Lower leg skin (tissue), 4 donors: ENCODE measurements at regions of chr11 and their contacts with region 1.

Region 1: GRCh38 chr11:115324581-115325432 is 179.4 kb downstream of the CADM1 start:
- DNase-seq: no peak
- H3K4me3 ChIP-seq: no peak overlapping the region
- CTCF ChIP-seq: peak in 1 of 3 donors; percentile 45
- POLR2A ChIP-seq: no peak

Region 2: GRCh38 chr11:115347138-115347537 is 22.3 kb after region 1 on chr11:
- intact Hi-C with region 1: no loop called
- DNase-seq: no peak
- H3K4me3 ChIP-seq: no peak overlapping the region
- CTCF ChIP-seq: no peak
- POLR2A ChIP-seq: no peak

Region 3: DNA sequence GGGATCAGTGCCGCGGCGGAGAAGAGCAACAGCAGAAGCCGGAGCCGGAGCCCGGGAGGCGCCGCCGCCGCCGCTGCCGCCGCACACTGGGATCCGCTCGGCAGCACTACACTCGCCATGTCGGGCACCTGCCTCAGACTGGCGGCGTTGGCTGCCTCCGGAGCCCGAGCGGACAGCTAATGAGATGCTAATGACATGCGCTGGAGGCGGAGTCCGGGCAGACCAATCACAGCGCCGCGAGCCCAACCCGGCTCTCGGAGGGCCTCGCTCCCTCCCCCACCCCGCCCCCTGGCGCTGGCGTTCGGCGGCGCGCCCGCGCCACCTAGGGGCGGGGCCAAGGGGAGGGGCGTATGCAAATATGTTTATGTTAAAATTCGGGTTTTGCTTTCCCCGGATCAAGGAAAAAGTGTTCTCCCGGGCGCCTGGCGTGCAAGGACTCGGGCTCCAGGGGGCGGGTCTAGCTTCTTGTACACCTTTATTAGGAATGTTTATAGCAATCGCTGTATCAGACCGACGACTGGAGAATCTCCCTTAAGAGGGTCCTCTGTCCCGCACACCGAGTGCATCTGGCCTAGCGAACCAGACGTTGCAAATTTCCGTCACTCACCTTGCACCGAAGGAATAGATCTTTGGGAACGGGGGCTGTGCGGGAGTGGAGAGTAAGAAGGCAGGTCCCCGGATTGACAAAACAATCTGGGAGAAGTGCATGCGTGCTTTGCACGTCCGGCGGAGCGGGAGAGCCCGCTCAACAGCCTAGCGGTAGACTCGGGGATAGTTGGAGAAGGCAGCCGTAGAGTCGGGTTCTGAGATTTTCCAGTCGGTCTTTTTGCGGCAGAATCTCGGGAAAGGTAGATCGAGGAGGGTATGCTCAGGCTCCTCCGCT is 179.7 kb after region 1 on chr11 and contains the start of gene CADM1:
- intact Hi-C with region 1: loop called (anchors 10 kb)
- DNase-seq: peak; percentile 90 to 98
- H3K4me3 ChIP-seq: peak within 1 kb of the TSS; percentile 38
- CTCF ChIP-seq: peak in 1 of 3 donors; percentile 42
- POLR2A ChIP-seq: no peak
- total RNA-seq, gene CADM1: 9.4 to 21.4 (median 11.8) TPM

Region 4: GRCh38 chr11:115912484-115912945 is 587.7 kb after region 1 on chr11:
- intact Hi-C with region 1: loop called (anchors 10 kb)
- DNase-seq: no peak
- H3K4me3 ChIP-seq: no peak overlapping the region
- CTCF ChIP-seq: no peak
- POLR2A ChIP-seq: no peak

Region 5: DNA sequence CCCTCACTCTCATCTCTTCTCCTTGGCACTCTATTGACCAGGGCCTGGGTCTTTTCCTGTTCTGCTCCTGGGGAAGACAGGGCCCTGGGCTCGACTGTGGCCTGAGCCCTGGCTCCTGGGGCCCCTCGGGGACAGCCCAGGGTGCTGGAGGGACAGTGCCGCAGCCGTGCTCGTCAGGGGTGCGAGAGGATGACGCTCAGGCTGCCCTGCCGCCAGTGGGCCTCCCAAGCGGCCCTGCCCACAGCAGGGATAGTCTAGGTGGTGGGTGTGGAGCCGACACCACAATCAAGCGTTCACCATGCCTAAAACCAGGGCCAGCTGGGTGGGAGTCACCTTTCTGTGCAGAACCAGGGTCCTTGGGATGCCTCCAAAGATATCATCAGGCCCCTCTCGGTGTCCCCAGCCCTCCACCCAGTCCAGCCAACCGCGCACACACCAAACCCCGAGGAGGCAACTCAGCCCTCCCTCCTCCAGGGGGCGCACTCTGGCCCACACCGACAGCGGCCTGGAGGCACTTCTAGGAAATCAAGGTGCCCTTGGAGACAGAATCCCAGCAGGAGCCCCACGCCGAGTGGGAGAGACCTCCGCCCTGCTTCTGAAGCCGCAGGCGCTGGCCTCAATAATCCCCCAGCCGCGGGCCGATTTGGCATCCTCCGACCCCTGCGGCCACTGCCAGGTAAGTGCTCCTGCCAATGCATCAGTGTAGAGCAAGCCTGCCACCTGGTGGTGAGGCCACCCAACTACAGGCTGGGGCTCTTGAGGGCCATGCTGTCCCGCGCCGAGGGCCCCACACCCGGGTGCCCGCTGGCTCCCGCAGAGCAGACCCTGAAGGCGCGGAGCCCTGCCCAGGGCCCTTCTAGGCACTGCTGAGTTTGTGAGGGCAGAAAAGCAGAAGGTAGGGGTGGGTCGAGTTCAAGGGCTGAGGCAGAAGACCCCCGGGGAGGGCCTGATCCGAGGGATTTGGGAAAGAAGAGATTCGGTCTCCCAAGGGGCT is 951.5 kb after region 1 on chr11:
- intact Hi-C with region 1: loop called (anchors 5 kb)
- DNase-seq: peak in 1 of 2 donors; percentile 91
- H3K4me3 ChIP-seq: no peak overlapping the region
- CTCF ChIP-seq: peak in 1 of 3 donors; percentile 86
- POLR2A ChIP-seq: no peak